SK-N-SH (cell line): ENCODE measurements at regions of chr3 and their contacts with region 1.

Region 1: DNA sequence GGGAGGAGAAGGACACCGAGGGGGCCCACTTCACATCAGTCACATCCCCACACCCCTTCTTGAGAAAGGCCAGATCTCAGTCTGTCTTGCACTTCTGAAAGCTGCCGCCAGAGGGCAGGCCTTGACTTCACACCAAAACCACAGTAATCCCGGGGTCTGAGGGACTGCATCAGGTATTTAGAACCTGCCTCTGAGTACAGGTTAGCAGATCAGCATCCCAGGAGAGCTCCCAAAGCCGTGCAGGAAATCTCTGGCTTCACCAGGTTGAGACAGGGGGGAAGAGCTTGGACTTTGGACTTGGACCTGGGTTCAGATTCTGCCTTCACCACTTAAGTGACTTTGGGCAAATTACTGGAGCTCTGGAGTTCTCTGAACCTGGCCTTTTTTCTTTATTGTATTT is 50.3 kb downstream of the LHFPL4 start:
- DNase-seq: peak; percentile 88
- H3K4me3 ChIP-seq: no peak overlapping the region; a peak in 1 of 4 replicates
- H3K27ac ChIP-seq: no peak overlapping the region
- H3K4me1 ChIP-seq: 0 out of 4 replicates have a peak, but pooled peaks cover 0 to 4% of the 10 kb centered on the region in 2 experiments
- H3K27me3 ChIP-seq: no peaks in the 10 kb centered on the region
- CTCF ChIP-seq: peak; percentile 90
- EP300 ChIP-seq: no peak
- RAD21 ChIP-seq: peak; percentile 89

Region 2: DNA sequence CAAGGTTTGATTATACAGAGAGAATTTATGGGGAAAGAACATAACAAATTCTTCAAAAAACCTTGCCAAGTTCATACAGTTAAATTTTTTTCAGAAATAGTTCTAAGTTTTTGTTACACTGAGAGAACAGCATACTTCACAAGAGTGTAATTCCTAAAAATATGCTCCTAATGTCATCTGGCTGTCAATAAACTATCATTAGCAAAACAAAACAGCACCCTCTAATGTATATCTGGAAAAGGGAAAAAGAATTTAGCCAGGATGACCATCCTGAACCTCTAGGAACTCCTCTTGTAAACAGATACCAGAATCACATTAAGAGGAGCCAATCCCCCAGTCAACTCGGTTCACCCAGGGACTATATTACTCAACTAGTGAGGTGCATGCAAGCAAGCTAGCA is 603.3 kb before region 1 on chr3:
- CTCF ChIA-PET with region 1: no interaction called
- POLR2A ChIA-PET with region 1: no interaction called
- DNase-seq: no peak
- H3K4me3 ChIP-seq: no peak overlapping the region
- H3K27ac ChIP-seq: peak overlapping the region in 1 of 2 experiments; percentile 7; a peak in 1 of 4 replicates
- H3K4me1 ChIP-seq: peaks cover 2 to 11% of the 10 kb centered on the region in 2 experiments; a peak in 3 of 4 replicates
- H3K27me3 ChIP-seq: no peaks in the 10 kb centered on the region
- CTCF ChIP-seq: no peak
- EP300 ChIP-seq: no peak
- RAD21 ChIP-seq: peak; percentile 28

Region 3: GRCh38 chr3:9452417-9452816 is 50.9 kb before region 1 on chr3:
- CTCF ChIA-PET with region 1: no interaction called
- POLR2A ChIA-PET with region 1: no interaction called
- DNase-seq: no peak
- H3K4me3 ChIP-seq: no peak overlapping the region
- H3K27ac ChIP-seq: peak overlapping the region in 1 of 2 experiments; percentile 24; a peak in 1 of 4 replicates
- H3K4me1 ChIP-seq: no peaks in the 10 kb centered on the region
- H3K27me3 ChIP-seq: no peaks in the 10 kb centered on the region
- CTCF ChIP-seq: no peak
- EP300 ChIP-seq: no peak
- RAD21 ChIP-seq: no peak

Region 4: GRCh38 chr3:9491506-9491905 is 11.8 kb before region 1 on chr3:
- CTCF ChIA-PET with region 1: interaction called, 13 read pairs
- POLR2A ChIA-PET with region 1: no interaction called
- DNase-seq: no peak
- H3K4me3 ChIP-seq: no peak overlapping the region
- H3K27ac ChIP-seq: no peak overlapping the region
- H3K4me1 ChIP-seq: no peaks in the 10 kb centered on the region
- H3K27me3 ChIP-seq: no peaks in the 10 kb centered on the region
- CTCF ChIP-seq: no peak
- EP300 ChIP-seq: no peak
- RAD21 ChIP-seq: no peak

Region 5: GRCh38 chr3:9731206-9732079 is 228.2 kb after region 1 on chr3 and contains the start of gene BRPF1:
- CTCF ChIA-PET with region 1: interaction called, 10 read pairs
- POLR2A ChIA-PET with region 1: no interaction called
- DNase-seq: peak; percentile 99
- H3K4me3 ChIP-seq: peak within 1 kb of the TSS; percentile 84 to 91
- H3K27ac ChIP-seq: peak within 1 kb of the TSS; percentile 95 to 98
- H3K4me1 ChIP-seq: peaks cover 5 to 14% of the 10 kb centered on the region in 2 experiments; a peak in 1 of 4 replicates
- H3K27me3 ChIP-seq: no peaks in the 10 kb centered on the region
- CTCF ChIP-seq: no peak
- EP300 ChIP-seq: peak; percentile 83 to 87; a peak in 3 of 4 replicates
- RAD21 ChIP-seq: no peak
- polyA plus RNA-seq, gene BRPF1: 12.0 and 13.0 TPM in 2 replicates

Region 6: DNA sequence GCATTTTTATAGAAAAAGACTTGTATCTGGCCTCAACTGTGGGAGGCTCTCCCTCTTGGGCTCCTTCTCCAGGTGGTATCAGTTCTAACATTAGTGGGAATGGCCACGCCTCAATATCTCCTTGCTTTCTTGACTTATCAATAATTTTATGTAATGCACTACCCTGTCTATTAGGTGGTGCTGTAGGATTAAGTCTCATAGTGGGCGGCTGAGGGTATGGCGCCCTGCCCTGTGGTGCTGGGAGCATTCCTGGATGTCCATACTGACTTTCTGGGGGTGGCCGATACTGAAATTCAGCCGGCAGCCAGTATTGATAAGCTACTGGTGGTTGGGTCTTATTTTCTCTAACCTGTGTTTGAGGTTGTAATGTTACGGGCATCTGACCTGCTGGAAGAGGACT is 349.3 kb after region 1 on chr3:
- CTCF ChIA-PET with region 1: no interaction called
- POLR2A ChIA-PET with region 1: no interaction called
- DNase-seq: no peak
- H3K4me3 ChIP-seq: no peak overlapping the region
- H3K27ac ChIP-seq: no peak overlapping the region
- H3K4me1 ChIP-seq: no peaks in the 10 kb centered on the region; a peak in 1 of 4 replicates
- H3K27me3 ChIP-seq: no peaks in the 10 kb centered on the region
- CTCF ChIP-seq: no peak
- EP300 ChIP-seq: no peak
- RAD21 ChIP-seq: 0 out of 2 replicates have a peak, but pooled peaks have one; percentile 7